Dendritic cell treated with granulocyte-macrophage colony-stimulating factor and Interleukin-4, amounts not matched to agents 40 ng/mL and 50 ng/mL, for 4 days (primary cell): ENCODE measurements at regions of chr16 and their contacts with region 1.

Region 1: DNA sequence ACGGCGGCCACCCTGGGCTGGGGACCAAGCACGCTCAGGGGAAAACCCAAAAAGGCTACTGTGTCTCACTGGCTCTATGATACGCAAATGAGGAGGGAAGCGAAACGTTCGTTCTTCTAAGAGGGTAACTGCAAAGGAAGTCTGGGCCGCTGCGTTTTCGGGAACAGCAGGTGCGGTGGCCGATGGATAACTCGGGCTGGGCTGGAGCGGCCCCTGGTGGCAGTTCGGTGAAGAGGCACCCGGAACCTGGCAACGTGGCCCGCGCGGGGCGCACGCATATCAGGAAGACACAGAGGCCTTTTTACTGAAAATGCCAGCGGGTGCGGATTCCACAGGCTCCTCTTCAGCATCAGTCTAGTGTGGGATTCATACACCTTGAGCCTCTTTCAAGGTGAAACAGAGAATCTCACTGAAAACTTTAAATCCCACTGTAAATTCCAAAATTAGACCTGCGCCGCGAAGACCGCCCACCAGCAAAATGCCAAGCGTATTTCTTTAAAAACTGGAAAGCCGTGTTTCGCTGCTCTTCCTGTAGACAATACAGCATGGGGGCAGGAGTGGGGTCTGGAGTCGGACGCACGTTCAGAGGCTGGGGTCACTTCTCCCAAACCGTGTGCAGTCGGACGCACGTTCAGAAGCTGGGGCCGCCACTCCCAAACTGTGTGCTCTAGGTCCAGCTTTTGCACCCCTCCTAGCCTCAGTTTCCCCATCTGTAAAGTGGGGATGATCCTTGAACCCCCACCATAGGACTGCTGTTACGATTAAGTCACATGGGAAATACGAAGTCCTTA is 44.4 kb upstream of the METTL9 start:
- H3K4me3 Mint-ChIP-seq: peak overlapping the region; percentile 50
- H3K27ac Mint-ChIP-seq: peak overlapping the region; percentile 48
- H3K4me1 Mint-ChIP-seq: peaks cover 22% of the 10 kb centered on the region
- H3K27me3 Mint-ChIP-seq: peaks cover 17% of the 10 kb centered on the region

Region 2: GRCh38 chr16:21184834-21185233 is 370.2 kb before region 1 on chr16:
- intact Hi-C with region 1: loop called (anchors 5 kb)
- H3K4me3 Mint-ChIP-seq: no peak overlapping the region
- H3K27ac Mint-ChIP-seq: no peak overlapping the region
- H3K4me1 Mint-ChIP-seq: peaks cover 13% of the 10 kb centered on the region
- H3K27me3 Mint-ChIP-seq: peaks cover 8% of the 10 kb centered on the region

Region 3: DNA sequence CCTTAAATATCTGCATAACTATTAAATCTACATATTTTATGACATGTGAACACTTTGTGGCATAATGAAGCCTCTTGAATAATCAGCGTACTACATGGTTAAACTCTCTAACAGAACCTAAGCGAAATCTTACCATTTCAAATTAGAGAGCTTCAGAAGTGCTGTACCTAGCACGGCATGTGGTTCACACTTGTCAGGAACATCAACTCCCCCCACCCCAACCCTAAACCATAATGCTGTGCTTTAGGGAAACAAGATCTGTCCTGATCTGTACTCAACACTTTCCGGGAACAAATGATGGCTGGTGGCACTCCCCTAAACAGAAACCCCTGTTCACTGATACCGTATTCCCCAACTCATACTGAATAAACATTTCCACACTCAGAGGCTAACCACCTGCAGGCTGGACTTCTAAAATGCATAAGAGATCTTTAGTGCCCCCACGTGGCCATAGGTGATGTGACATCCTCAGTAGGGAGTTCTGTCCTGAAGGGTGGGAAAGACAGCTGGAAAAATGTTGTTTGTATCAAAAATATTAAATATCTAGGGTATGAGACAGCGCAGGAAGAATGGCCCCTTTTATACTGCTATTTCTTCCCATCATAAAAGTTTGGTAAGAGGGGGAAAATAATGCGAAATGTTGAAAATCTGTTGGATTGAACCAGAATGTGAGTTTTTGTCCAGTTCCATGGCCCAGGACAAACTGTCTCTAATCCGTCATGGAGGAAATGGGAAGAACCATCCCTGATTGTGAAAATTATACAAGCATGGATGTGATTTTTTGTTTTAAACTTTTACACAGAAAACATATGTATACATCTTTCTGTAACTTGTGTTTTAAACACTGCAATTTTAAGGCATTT is 1505.7 kb after region 1 on chr16:
- intact Hi-C with region 1: loop called (anchors 5 kb)
- H3K4me3 Mint-ChIP-seq: no peak overlapping the region
- H3K27ac Mint-ChIP-seq: no peak overlapping the region
- H3K4me1 Mint-ChIP-seq: peaks cover 6% of the 10 kb centered on the region
- H3K27me3 Mint-ChIP-seq: peaks cover 18% of the 10 kb centered on the region